Panc1 (cell line): ENCODE measurements at regions of chr14 and their contacts with region 1.

Region 1: DNA sequence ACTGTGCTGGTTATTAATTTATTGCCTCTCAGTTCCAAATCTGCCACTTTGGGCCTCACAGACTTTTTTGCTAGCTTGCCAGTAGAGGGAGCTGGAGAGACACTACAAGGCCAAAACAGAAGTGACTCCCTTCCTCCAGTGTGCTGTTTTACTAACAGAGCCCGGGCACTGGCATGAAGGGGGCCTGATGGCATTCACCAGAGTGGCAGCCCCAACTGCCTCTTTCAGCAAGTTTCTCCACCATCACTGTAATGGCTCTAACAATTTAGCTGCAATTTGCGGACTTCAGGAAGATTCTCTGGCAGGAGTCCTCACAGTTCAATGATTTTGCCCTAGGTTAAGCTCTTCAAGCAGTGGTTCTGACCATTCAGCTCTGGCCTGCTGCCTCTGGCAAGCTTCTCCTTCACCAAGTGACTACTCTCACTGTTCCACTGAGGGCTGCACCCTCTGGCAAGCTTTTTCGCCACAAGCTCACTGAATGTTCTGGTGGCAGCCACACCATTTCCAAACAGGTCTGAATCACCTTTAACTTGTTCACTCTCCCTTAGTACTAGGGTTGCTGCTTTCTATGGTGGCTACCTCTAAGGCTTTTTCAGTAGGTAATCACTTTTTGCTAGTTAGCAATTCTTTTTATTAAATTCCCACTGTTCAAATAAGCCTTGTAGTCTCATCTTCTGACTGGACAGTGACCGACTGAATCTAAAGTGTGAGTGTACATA is 104.9 kb downstream of the ZC3H14 start:
- DNase-seq: peak; percentile 46
- ATAC-seq: peak; percentile 84
- H3K4me3 ChIP-seq: no peak overlapping the region
- H3K27ac ChIP-seq: no peak overlapping the region
- H3K4me1 ChIP-seq: no peaks in the 10 kb centered on the region
- H3K27me3 ChIP-seq: no peaks in the 10 kb centered on the region; the same call in 1 of the 2 replicates
- CTCF ChIP-seq: peak; percentile 82

Region 2: DNA sequence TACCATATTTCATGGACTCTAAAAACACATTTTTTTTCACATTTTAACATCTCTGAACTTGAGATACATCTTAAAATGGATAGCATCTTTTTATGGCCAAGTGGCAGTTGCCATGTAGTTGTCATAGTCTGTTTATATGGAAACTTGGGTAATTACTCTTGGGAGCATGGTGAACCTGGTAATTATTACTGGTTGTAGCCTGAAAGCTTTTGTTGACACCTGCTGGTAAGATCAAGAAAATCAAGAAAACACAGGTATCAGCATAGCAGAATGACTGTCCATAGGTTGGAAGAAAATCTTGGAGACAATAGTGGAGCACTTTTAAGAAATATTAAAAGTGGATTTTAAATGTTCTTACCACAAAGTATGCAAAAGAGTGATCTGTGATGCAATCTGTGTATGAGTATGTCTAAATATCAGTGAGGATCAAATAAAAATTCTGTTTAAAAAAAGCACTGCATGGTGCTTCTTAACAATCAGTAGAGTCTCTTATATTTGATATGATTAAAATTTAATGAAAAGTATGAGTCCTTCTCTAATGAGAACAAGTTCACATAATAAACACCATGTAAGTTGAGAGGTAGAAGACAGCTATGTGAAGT is 200.9 kb after region 1 on chr14:
- CTCF ChIA-PET with region 1: interaction called, 4 read pairs
- POLR2A ChIA-PET with region 1: no interaction called
- in situ Hi-C with region 1: no loop called
- intact Hi-C with region 1: loop called (anchors 2 kb)
- DNase-seq: no peak
- ATAC-seq: peak; percentile 63; the same call in 1 of the 2 replicates
- H3K4me3 ChIP-seq: no peak overlapping the region
- H3K27ac ChIP-seq: no peak overlapping the region
- H3K4me1 ChIP-seq: no peaks in the 10 kb centered on the region
- H3K27me3 ChIP-seq: no peaks in the 10 kb centered on the region
- CTCF ChIP-seq: peak; percentile 45; the same call in 1 of the 2 replicates

Region 3: DNA sequence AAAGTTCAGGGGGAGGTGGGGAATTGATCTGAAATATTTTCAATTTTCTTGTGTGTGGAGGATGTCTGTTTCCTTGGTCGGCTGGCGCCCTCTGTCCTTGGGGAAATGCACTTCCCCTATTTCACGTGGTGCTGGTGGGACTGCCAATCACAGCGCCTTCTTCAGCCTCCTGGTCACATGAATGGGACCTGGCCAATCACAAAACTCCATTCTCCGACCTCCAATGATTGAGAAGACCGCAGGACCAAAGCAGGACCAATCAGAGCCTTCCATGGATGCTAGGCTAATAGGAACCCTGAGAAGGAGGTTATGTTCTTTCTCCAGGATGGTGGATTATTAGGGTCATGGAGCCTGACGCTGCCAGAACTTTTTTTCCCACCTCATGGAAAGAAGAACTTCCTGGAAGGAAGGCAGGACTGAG is 345.4 kb after region 1 on chr14:
- CTCF ChIA-PET with region 1: no interaction called
- POLR2A ChIA-PET with region 1: no interaction called
- in situ Hi-C with region 1: no loop called
- intact Hi-C with region 1: loop called (anchors 2 kb)
- DNase-seq: peak; percentile 32
- ATAC-seq: peak; percentile 82
- H3K4me3 ChIP-seq: peak overlapping the region in 1 of 2 experiments; percentile 60; a peak in 2 of 4 replicates
- H3K27ac ChIP-seq: no peak overlapping the region
- H3K4me1 ChIP-seq: no peaks in the 10 kb centered on the region
- H3K27me3 ChIP-seq: no peaks in the 10 kb centered on the region
- CTCF ChIP-seq: peak; percentile 63